ENCODE measurements at regions of chr11 and their contacts with region 1.

Region 1: DNA sequence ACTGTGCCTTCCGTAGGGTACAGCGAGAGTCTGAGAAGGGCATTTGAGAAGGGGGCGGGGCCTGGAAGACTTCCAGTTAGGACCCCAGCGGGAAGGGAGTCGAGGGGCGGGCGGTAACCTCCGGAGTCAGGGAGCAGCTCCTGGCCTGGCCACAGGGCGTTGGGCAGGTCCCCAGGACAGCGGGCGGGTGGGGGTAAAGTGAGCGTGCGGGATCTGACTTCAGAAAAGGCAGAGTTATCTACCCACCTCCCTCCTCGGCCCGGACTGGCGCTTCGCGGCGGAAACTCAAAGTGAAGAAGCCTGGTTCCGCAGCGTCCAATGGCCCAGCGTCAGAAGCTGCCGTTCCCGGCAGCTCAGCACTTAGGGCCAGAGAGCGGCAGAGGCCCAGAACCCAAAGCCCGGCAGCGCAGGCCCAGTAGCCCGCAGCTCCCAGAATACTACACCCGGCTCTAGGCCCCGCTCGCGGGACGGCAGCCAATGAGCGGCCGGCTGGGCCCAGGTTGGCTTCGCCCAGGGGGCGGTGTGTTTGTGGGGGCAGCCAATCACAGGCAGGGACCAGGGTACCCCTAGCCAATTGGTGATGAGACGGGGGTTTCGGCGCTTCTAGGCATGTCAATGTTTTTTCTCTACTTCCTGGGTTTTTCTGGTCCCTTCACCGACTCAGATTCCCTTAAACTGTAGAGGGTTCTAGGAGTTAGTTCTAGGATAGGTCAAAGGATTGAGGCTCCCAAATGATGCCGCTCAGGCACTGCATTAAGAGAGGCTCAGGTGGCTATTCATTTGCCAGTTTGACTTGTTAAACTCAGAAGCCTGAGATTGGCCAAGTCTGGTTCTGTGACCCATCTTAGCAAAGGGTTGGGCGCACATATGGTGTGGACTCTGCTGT is at the start of gene TRIM68:
- DNase-seq: peak; percentile 89 to 96 (median 95)
- ATAC-seq: peak; percentile 99
- H3K4me3 ChIP-seq: peak within 1 kb of the TSS; percentile 81 to 84
- H3K4me3 Mint-ChIP-seq: peak within 1 kb of the TSS; percentile 93
- H3K27ac ChIP-seq: peak within 1 kb of the TSS; percentile 76 to 85
- H3K27ac Mint-ChIP-seq: peak within 1 kb of the TSS; percentile 92
- H3K4me1 ChIP-seq: peaks cover 33% of the 10 kb centered on the region
- H3K4me1 Mint-ChIP-seq: peaks cover 56% of the 10 kb centered on the region
- H3K27me3 ChIP-seq: no peaks in the 10 kb centered on the region
- H3K27me3 Mint-ChIP-seq: no peaks in the 10 kb centered on the region
- CTCF ChIP-seq: no peak
- total RNA-seq, gene TRIM68: 6.0 to 6.9 TPM

Region 2: DNA sequence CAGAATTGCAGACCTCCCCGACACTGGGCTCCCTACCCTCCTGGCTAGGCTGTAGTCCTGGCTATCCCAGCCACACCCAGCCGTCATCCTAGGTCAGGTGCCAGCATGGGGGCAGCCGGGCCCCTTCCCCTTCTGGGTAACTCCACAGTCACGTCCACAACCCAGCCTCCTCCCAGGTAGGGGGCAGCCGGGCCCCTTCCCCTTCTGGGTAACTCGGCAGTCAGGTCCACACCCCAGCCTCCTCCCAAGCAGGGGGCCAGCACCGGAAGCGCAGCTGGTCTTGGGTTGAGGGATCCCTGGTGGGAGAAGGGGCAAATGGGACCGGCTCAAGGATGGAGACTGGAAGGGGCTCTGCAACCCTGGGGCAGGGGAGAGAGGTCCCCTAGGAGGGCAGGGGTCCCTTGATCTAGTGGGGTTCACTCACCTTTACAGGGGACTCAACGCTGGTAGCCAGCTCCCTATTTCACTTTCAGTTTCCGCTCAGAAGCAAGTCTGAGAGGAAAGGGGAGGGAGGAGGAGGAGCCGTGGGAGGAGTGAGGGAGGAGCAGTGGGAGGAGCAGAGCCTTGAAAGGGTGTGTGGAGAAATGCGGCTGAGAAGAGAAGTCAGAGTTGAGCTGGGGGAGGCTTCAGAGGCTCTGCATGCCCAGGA is 214.7 kb before region 1 on chr11 and contains the start of gene TRIM21:
- CTCF ChIA-PET with region 1: no interaction called
- POLR2A ChIA-PET with region 1: no interaction called
- intact Hi-C with region 1: loop called (anchors 1 to 2 kb)
- DNase-seq: peak; percentile 78 to 93 (median 88)
- ATAC-seq: peak; percentile 99
- H3K4me3 ChIP-seq: peak within 1 kb of the TSS; percentile 81 to 89
- H3K4me3 Mint-ChIP-seq: peak within 1 kb of the TSS; percentile 94
- H3K27ac ChIP-seq: peak within 1 kb of the TSS; percentile 82 to 89
- H3K27ac Mint-ChIP-seq: peak within 1 kb of the TSS; percentile 95
- H3K4me1 ChIP-seq: peaks cover 18% of the 10 kb centered on the region
- H3K4me1 Mint-ChIP-seq: peaks cover 43% of the 10 kb centered on the region
- H3K27me3 ChIP-seq: no peaks in the 10 kb centered on the region
- H3K27me3 Mint-ChIP-seq: no peaks in the 10 kb centered on the region
- CTCF ChIP-seq: no peak
- total RNA-seq, gene TRIM21: 23.4 to 23.6 TPM

Region 3: DNA sequence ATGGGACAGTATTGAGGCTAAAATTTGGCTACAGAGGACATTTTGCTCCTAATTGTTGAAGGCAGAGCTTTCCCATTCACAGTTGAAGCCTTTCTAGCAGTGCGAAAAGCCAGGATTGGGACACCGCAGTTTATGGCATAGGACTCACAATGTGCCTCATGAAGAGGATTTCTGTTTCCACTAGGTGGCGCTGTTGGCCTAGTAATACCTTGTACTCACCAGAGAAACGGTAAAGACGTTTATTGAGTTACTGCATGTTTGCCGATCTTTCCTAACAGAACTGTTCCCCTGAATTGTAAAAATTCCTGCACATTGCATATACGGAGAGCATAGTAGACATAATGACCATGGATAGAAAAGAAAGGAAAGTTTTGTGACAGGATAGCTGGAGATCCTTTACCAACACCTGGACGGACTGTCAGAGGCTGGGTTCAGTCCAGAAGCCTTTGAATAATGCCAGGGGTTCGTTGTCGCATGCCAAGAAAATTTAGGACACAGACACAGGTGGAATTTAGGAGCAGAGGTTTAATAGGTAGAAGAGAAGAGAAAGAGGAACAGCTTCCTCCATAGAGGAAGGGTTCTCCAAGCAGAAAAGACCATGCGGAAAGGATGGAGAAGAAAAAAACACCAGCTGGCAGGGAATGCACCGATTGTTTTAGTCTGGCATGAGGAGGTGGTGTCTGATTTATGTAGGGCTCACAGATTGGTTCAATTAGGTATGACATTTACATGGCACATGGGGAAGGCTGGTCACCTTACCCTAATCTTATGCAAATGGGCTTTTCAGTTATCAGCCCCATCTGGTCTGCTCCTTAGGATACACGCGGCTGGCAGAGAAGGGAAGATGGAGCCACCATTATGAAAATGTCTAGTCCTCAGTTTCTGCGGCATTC is 18.4 kb after region 1 on chr11:
- CTCF ChIA-PET with region 1: no interaction called
- POLR2A ChIA-PET with region 1: no interaction called
- intact Hi-C with region 1: loop called in 1 of 2 experiments (anchors 1 kb)
- DNase-seq: peak in 5 of 9 experiments; percentile 39 to 54 (median 43)
- ATAC-seq: no peak
- H3K4me3 ChIP-seq: no peak overlapping the region
- H3K4me3 Mint-ChIP-seq: no peak overlapping the region
- H3K27ac ChIP-seq: no peak overlapping the region
- H3K27ac Mint-ChIP-seq: no peak overlapping the region
- H3K4me1 ChIP-seq: no peaks in the 10 kb centered on the region
- H3K4me1 Mint-ChIP-seq: no peaks in the 10 kb centered on the region
- H3K27me3 ChIP-seq: no peaks in the 10 kb centered on the region
- H3K27me3 Mint-ChIP-seq: peaks cover 31% of the 10 kb centered on the region
- CTCF ChIP-seq: peak; percentile 54

Region 4: DNA sequence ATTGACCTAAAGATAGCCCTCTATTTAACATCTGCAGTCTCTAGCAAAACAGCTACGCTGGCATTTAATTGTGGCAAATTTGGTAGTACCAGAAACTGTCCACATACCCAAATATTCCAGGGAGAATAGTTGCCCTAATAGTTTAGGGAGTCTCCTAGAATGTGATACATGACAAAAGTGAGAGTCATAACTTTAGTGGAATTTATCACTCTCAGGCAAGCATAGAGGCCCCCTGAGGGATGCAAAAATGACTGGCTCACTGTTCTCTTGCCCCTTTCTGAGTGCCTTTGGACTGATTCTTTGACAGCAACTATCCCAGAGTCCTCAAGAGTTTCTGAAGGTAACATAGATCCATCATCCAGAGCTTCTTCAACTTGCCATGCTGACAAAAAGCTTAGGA is 696.0 kb after region 1 on chr11:
- CTCF ChIA-PET with region 1: no interaction called
- POLR2A ChIA-PET with region 1: no interaction called
- intact Hi-C with region 1: no loop called
- DNase-seq: no peak
- ATAC-seq: no peak
- H3K4me3 ChIP-seq: no peak overlapping the region
- H3K4me3 Mint-ChIP-seq: no peak overlapping the region
- H3K27ac ChIP-seq: no peak overlapping the region
- H3K27ac Mint-ChIP-seq: no peak overlapping the region
- H3K4me1 ChIP-seq: no peaks in the 10 kb centered on the region
- H3K4me1 Mint-ChIP-seq: no peaks in the 10 kb centered on the region
- H3K27me3 ChIP-seq: no peaks in the 10 kb centered on the region
- H3K27me3 Mint-ChIP-seq: no peaks in the 10 kb centered on the region
- CTCF ChIP-seq: no peak

Measured in CD8-positive, alpha-beta T cell (primary cell).